ENCODE measurements at regions of chr2 and their contacts with region 1.

Region 1: DNA sequence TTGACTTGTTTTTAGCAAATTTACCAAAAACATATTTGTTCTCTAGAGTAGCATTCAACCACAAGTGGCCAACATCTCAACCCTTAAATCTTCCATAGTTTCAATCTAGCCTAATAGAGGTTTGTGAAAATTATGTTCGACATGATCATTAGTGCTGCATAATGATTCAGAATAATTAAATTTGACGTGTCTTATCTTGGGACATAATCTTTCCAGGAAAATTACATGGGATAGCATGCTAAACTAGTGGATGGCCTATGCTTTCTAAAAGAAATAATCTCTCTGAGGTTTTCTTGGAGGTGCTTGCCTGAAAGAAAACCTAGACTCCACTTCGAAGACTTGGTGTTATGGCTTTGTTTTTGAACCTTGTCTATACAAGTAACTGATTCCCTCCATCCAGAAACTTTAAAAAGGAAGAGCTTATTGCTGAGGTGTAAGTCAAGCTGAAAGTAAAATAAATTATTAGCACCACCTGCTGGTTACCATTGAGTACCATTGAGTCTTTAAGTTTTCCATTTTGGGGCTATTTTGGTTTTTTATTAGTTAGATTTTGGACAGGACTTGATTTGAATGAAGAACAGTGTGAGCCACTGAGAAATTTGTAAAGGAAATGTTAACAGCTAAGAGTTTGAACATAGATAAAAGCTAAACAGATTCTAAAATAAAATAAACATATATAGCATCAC is 32.7 kb downstream of the COX7A2L start:
- DNase-seq: no peak
- H3K4me3 ChIP-seq: no peak overlapping the region
- H3K27ac ChIP-seq: no peak overlapping the region
- H3K4me1 ChIP-seq: no peaks in the 10 kb centered on the region
- H3K27me3 ChIP-seq: no peaks in the 10 kb centered on the region
- CTCF ChIP-seq: peak in 3 of 4 experiments; percentile 66 to 81 (median 74)
- POLR2A ChIP-seq: no peak

Region 2: DNA sequence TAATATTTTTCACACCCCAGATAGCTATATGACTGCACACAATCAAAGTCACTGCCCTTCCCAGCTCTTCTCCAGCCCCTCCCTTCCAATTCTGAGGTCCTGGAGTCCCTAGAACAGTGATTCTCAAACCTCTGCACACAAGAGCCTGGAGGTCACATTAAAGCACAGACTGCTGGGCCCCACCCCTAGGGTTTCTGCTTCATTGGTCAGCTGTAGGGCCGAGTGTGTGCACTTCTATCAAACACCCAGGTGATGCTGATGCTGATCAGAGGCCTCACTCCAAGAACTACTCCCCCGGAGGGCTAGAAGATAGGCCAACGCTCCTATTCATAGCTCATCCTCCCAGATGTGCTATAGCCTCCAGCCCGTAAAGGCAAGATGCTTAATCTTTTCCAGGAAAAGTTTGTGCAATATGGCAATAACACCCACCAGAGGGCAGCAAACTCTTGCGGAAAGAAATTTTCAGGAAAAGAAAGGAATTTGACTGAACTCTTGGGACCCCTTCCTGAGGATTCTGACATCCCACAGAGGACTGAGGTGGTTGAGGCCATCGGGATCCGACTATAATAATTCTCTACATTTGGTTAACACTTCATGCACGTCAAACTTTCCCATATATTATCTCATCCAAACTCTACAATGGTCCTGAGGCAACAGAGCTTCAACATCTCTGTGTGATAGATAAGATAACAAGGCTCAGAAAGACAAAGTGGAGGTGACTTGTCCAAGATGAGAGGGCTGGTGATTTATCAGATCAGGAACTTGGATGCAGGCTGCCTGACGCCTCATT is 474.7 kb before region 1 on chr2:
- intact Hi-C with region 1: loop called (anchors 10 kb)
- DNase-seq: peak; percentile 33
- H3K4me3 ChIP-seq: no peak overlapping the region
- H3K27ac ChIP-seq: no peak overlapping the region
- H3K4me1 ChIP-seq: no peaks in the 10 kb centered on the region
- H3K27me3 ChIP-seq: no peaks in the 10 kb centered on the region
- CTCF ChIP-seq: peak; percentile 57 to 69 (median 62)
- POLR2A ChIP-seq: no peak

Region 3: DNA sequence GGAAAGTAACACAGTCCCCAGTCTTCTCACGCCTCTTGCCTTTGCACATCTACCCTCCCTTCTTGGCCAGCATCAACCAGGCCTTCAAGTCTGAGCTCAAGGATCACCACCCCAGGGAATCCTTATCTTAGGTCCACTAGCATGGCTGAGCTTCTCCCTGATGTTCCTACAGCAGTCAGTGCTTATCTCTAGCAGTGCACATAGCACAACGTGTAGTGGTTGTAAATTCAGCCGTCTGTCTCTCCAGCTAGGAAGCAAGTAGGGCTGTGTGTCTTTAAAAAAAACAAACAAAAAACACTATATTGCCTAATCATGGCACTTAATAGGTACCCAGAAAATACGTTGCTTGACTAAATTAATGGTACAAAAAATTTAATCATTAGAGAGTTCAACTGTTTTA is 136.3 kb after region 1 on chr2:
- intact Hi-C with region 1: no loop called
- DNase-seq: no peak
- H3K4me3 ChIP-seq: no peak overlapping the region
- H3K27ac ChIP-seq: no peak overlapping the region
- H3K4me1 ChIP-seq: no peaks in the 10 kb centered on the region
- H3K27me3 ChIP-seq: no peaks in the 10 kb centered on the region
- CTCF ChIP-seq: no peak
- POLR2A ChIP-seq: no peak

Measured in prostate gland (tissue), 2 donors.